Natural killer cell (primary cell): ENCODE measurements at regions of chr12 and their contacts with region 1.

Region 1: DNA sequence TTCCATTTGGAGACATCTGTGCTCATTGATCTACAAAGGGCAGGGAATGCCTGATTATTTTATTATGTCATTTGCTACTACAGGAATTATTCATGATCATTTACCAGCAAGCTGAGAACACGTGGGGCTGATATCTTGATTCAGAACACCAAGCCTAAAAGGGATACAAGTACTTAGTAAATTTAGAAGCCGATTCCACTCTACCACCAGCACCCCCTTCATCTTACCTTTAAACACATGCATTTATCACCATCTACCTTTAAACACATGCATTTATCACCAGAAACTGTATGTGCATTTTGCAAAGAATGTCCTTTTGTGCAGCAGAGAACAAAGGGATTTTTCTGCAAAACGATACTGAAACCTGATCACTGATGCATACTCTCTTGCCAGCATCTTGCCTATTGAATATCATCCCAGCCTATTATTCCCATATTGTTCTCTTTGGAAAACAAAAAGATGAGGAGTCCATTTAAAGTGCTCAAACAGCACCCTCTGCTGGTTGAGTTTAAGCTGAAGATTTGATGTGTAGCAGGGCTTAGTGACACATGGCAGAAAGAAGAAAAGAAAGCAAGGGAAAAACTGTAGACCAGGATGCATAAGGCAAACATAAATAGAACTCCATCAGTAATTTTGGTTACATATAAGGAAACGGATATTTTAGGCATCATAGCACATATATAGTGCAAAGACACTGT is 132.6 kb upstream of the PLEKHG7 start:
- DNase-seq: peak in 1 of 2 donors; percentile 86
- ATAC-seq: peak; percentile 70 to 81 (median 80)
- H3K4me3 ChIP-seq: no peak overlapping the region
- H3K4me3 Mint-ChIP-seq: no peak overlapping the region
- H3K27ac ChIP-seq: peak overlapping the region; percentile 9
- H3K27ac Mint-ChIP-seq: no peak overlapping the region
- H3K4me1 ChIP-seq: no peaks in the 10 kb centered on the region
- H3K4me1 Mint-ChIP-seq: peaks cover 0 to 10% of the 10 kb centered on the region in 2 donors
- H3K27me3 ChIP-seq: no peaks in the 10 kb centered on the region
- H3K27me3 Mint-ChIP-seq: no peaks in the 10 kb centered on the region
- CTCF ChIP-seq: peak; percentile 88

Region 2: GRCh38 chr12:91577586-91578539 is 992.3 kb before region 1 on chr12:
- intact Hi-C with region 1: loop called (anchors 5 kb)
- DNase-seq: peak in 1 of 2 donors; percentile 55
- ATAC-seq: peak; percentile 62 to 79 (median 75)
- H3K4me3 ChIP-seq: no peak overlapping the region
- H3K4me3 Mint-ChIP-seq: peak overlapping the region; percentile 77
- H3K27ac ChIP-seq: no peak overlapping the region
- H3K27ac Mint-ChIP-seq: no peak overlapping the region
- H3K4me1 ChIP-seq: no peaks in the 10 kb centered on the region
- H3K4me1 Mint-ChIP-seq: peaks cover 5 to 9% of the 10 kb centered on the region in 2 donors
- H3K27me3 ChIP-seq: no peaks in the 10 kb centered on the region
- H3K27me3 Mint-ChIP-seq: peaks cover 8 to 29% of the 10 kb centered on the region in 2 donors
- CTCF ChIP-seq: peak; percentile 86

Region 3: DNA sequence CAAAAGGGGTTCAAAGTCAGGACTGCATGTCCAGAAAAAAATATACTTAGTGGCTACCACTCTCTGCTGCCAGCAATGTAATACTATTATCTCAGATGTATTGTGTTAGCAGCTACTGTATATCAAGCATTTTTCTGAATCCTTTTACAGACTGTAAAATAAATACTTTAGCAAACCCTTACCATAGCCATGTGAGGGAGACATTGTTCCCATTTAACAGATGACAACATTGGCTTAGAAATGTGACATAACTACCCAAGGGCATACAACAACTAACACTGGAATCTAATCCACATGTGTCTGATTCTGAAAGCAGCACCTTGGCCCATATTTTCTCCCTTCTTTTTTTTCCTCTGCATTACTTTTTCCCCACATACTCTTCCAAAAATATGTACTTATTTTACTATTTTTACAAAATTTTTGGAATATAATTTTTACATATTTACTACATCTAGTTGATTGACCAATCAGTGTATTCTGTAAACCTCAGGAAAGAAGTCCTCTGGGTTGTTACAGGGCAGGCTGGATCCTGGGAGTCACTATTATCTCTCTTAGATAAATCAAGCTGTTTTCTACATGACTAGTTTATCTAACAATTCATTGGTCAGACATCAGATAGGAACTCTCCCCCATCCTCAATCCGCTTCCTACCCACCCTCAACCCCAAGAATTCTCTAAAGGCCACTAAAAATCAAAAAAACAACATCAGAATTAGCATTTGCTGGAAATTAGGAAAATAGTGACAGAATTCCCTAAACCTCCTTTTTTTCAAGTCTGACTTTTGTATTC is 578.6 kb before region 1 on chr12:
- intact Hi-C with region 1: loop called (anchors 5 kb)
- DNase-seq: peak in 1 of 2 donors; percentile 74
- ATAC-seq: peak; percentile 69 to 86 (median 78)
- H3K4me3 ChIP-seq: no peak overlapping the region
- H3K4me3 Mint-ChIP-seq: no peak overlapping the region
- H3K27ac ChIP-seq: no peak overlapping the region
- H3K27ac Mint-ChIP-seq: no peak overlapping the region
- H3K4me1 ChIP-seq: no peaks in the 10 kb centered on the region
- H3K4me1 Mint-ChIP-seq: peaks cover 6 to 15% of the 10 kb centered on the region in 2 donors
- H3K27me3 ChIP-seq: no peaks in the 10 kb centered on the region
- H3K27me3 Mint-ChIP-seq: no peaks in the 10 kb centered on the region
- CTCF ChIP-seq: no peak

Region 4: GRCh38 chr12:92431146-92431545 is 139.1 kb before region 1 on chr12:
- intact Hi-C with region 1: loop called (anchors 1 kb)
- DNase-seq: peak; percentile 29 to 47
- ATAC-seq: peak; percentile 67 to 95 (median 79)
- H3K4me3 ChIP-seq: no peak overlapping the region
- H3K4me3 Mint-ChIP-seq: peak overlapping the region; percentile 41
- H3K27ac ChIP-seq: no peak overlapping the region
- H3K27ac Mint-ChIP-seq: no peak overlapping the region
- H3K4me1 ChIP-seq: peaks cover 12% of the 10 kb centered on the region
- H3K4me1 Mint-ChIP-seq: peaks cover 48 to 49% of the 10 kb centered on the region in 2 donors
- H3K27me3 ChIP-seq: no peaks in the 10 kb centered on the region
- H3K27me3 Mint-ChIP-seq: no peaks in the 10 kb centered on the region
- CTCF ChIP-seq: no peak

Region 5: GRCh38 chr12:92593734-92594402 is 23.7 kb after region 1 on chr12:
- intact Hi-C with region 1: loop called (anchors 1 kb)
- DNase-seq: peak; percentile 70 to 96
- ATAC-seq: peak; percentile 86 to 97 (median 91)
- H3K4me3 ChIP-seq: no peak overlapping the region
- H3K4me3 Mint-ChIP-seq: peak overlapping the region; percentile 83
- H3K27ac ChIP-seq: peak overlapping the region; percentile 99
- H3K27ac Mint-ChIP-seq: peak overlapping the region; percentile 91 to 98
- H3K4me1 ChIP-seq: peaks cover 21% of the 10 kb centered on the region
- H3K4me1 Mint-ChIP-seq: peaks cover 33 to 49% of the 10 kb centered on the region in 2 donors
- H3K27me3 ChIP-seq: no peaks in the 10 kb centered on the region
- H3K27me3 Mint-ChIP-seq: no peaks in the 10 kb centered on the region
- CTCF ChIP-seq: no peak